Left cardiac atrium (tissue), 4 donors: ENCODE measurements at regions of chr13 and their contacts with region 1.

Region 1: GRCh38 chr13:49279885-49280284 is 32.2 kb downstream of the CDADC1 start:
- DNase-seq: no peak
- ATAC-seq: no peak

Region 2: DNA sequence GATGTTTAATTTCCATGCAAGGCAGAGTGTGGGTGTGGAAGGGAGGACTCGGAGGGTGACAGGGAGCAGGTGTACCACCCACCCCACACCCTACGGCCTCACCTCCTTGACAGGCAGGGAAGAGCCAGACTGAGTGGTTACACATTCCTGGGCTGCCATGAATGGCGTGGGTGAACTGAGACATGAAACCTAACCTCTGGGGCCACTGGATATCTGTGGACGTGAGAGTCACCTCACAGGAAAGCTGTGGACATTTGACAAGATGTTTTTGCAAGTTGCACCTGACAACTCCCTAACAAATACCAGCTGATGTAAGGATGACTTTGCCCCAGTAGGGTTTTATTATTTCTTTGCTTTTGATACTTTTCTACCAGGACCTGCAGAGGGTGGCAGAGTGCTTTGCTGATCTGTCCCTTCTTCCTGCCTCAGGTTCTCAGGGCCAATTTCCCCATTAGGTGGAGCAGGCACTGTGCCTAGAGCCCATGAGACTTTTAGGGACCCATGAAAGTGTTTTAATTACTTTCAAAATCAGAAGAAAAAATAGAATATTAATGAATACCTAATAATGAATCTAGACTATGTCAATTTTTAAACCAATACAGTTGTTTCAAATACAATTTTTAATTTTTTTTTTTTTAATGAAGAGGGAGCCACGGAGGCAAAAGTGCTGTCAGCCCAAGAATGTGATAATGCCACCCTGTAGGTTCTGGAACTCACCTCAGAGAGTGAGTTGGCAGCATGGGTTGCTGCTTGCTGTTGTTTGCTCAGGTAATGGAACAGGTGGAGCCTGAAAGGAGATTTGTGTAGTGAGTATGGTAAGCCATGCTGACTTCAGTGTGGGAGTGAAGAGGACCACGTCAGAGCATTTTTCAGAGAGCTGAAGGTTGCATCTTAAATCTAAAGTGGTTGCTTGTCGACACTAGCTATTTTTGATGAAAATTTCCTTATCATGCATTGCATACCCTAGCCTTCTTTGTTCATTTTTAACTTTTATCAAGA is 684.2 kb before region 1 on chr13:
- intact Hi-C with region 1: loop called in 1 of 2 experiments (anchors 10 kb)
- DNase-seq: peak; percentile 69
- ATAC-seq: peak; percentile 94 to 95

Region 3: GRCh38 chr13:49517461-49517860 is 237.6 kb after region 1 on chr13:
- intact Hi-C with region 1: no loop called
- DNase-seq: no peak
- ATAC-seq: peak; percentile 33 to 52